ENCODE measurements at regions of chr20 and their contacts with region 1.

Region 1: GRCh38 chr20:62668441-62669027 is 26.2 kb downstream of the SLCO4A1 start:
- DNase-seq: no peak
- H3K4me3 ChIP-seq: no peak overlapping the region
- CTCF ChIP-seq: peak; percentile 85

Region 2: DNA sequence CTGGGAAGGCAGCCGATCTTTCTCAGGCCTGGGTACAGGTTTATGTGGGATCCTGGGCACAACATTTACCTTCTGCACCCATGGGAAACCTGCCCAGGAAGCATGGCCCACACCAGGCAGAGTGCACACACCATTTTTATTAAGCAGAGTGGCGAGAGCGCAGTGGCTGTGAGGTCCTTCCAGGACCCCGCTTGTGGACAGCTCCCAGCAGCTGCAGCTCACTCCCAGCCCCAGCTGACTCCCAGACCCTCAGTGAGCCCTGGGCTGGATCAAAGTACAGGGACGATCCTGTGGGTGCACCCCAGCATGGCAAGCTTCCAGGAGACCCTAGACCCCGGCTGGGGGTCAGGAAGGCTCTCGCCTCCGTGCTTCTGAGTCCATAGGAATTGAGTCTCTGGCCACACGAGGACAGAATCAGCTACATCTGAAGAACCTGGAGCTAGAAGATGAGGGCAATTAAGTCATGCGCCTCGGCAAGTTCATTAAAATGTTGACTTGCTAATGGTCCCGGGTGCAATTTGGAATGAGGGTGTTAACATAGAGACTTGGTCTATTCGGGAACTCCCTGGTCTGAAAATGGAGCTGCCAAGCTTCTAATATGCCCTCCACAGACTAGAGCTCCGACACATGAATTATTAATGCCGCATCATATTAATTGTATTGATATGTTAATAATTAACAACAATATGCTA is 91.6 kb before region 1 on chr20:
- CTCF ChIA-PET with region 1: no interaction called
- POLR2A ChIA-PET with region 1: no interaction called
- DNase-seq: no peak
- H3K4me3 ChIP-seq: no peak overlapping the region
- CTCF ChIP-seq: no peak

Region 3: DNA sequence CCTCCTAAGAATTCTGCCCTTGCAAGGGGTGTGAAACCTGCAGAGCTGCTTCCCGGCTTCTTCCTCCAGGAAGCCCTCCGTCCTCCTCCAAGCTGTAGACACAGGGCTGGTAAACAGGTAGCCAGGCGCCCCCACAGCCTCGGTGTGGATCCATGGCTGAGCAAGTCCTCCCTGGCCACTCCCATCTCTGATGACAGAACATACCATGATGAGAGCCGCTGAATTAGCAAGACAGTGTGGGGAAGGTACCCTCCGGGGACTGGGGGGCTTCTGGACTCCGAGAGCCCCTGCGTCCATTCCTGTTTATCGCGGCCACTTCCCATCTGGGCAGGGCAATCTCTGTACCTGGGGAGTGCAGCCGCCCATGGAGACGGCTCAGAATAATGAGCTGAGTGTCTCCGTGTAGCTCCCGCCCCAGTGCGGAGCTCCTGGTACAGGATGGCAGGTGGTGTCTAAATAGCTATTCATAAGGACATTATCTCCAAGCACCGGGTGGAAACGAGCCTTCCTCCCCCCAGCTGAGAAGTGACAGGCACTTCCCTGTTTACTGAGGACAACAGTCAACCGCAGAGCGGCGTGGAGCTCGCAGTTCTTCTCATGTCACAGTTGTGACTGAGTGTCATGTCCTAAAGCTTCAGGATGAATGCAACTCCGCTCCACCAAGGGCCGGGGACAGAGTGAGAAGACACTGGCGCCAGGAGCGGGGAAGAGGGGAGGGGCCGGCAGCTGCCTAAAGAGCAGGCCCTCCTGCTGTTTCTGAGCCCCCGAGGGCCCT is 17.4 kb after region 1 on chr20:
- CTCF ChIA-PET with region 1: interaction called, 12 read pairs
- POLR2A ChIA-PET with region 1: no interaction called
- DNase-seq: no peak
- H3K4me3 ChIP-seq: no peak overlapping the region
- CTCF ChIP-seq: no peak

Measured in AG04449 (cell line).